Mammary epithelial cell (primary cell): ENCODE measurements at regions of chr3 and their contacts with region 1.

Region 1: GRCh38 chr3:38689774-38690173 is 40.3 kb upstream of the SCN5A start:
- DNase-seq: no peak
- H3K4me3 ChIP-seq: no peak overlapping the region
- H3K27ac ChIP-seq: no peak overlapping the region
- H3K4me1 ChIP-seq: no peaks in the 10 kb centered on the region
- H3K27me3 ChIP-seq: no peaks in the 10 kb centered on the region
- CTCF ChIP-seq: no peak

Region 2: DNA sequence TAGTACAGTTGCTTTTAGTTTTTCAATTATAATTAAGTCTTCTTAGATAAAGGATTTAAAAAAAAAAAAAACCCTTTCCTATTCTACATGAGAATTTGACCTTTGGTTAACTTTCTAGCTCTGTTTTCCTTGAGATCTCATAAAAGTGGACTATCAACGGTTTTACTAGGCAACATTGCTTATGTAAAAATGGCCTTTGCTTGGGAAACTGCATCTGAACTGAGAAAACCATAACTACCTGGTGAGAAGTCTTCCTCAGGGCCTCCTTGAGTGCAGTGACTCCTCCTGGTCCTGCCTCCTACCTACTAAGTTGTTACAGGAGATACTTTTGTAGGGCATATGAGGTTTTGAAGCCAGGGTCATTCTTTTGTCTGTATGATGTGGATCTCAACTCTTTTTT is 278.2 kb before region 1 on chr3:
- CTCF ChIA-PET with region 1: no interaction called
- dilution Hi-C with region 1: no loop called
- in situ Hi-C with region 1: no loop called
- intact Hi-C with region 1: no loop called
- DNase-seq: no peak
- H3K4me3 ChIP-seq: no peak overlapping the region
- H3K27ac ChIP-seq: no peak overlapping the region
- H3K4me1 ChIP-seq: no peaks in the 10 kb centered on the region
- H3K27me3 ChIP-seq: no peaks in the 10 kb centered on the region
- CTCF ChIP-seq: no peak

Region 3: DNA sequence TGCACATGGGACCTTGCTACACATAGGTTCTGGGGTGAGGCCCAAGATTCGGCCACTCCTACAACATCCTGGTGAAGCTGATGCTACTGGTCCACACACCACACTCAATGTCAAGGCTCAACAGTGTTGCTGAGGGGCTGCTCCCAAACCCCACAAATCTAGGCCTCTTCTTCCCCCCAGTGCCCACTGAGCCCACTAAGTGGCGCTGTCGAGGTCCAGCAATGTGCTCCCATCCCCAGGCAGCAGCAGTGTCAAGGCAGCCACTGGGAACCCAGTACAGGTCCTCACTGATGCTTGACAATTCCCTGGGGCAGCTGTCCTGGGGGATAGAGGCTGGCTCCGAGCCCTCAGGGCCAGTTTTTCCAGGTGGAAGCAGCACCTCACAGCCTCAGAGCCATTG is 61.8 kb before region 1 on chr3:
- CTCF ChIA-PET with region 1: interaction called, 4 read pairs
- dilution Hi-C with region 1: no loop called
- in situ Hi-C with region 1: no loop called
- intact Hi-C with region 1: loop called (anchors 10 kb)
- DNase-seq: no peak
- H3K4me3 ChIP-seq: no peak overlapping the region
- H3K27ac ChIP-seq: no peak overlapping the region
- H3K4me1 ChIP-seq: no peaks in the 10 kb centered on the region
- H3K27me3 ChIP-seq: peaks cover 2% of the 10 kb centered on the region
- CTCF ChIP-seq: peak; percentile 43 to 54